ENCODE measurements at regions of chr13 and their contacts with region 1.

Region 1: GRCh38 chr13:49996951-49997895 is at the start of gene TRIM13:
- DNase-seq: peak; percentile 64 to 85 (median 82)
- ATAC-seq: peak; percentile 88
- H3K4me3 ChIP-seq: peak within 1 kb of the TSS; percentile 97
- H3K4me3 Mint-ChIP-seq: peak within 1 kb of the TSS; percentile 83 to 95 (median 86)
- H3K27ac ChIP-seq: peak within 1 kb of the TSS; percentile 89
- H3K27ac Mint-ChIP-seq: peak within 1 kb of the TSS; percentile 84 to 92 (median 87)
- H3K4me1 ChIP-seq: peaks cover 25 to 31% of the 10 kb centered on the region in 2 donors
- H3K4me1 Mint-ChIP-seq: peaks cover 16 to 57% (median 49%) of the 10 kb centered on the region in 7 donors
- H3K27me3 ChIP-seq: no peaks in the 10 kb centered on the region
- H3K27me3 Mint-ChIP-seq: no peaks in the 10 kb centered on the region
- total RNA-seq, gene TRIM13: 18.3 to 27.1 (median 21.8) TPM

Region 2: GRCh38 chr13:48037346-48038173 is 1959.7 kb before region 1 on chr13 and contains the start of gene NUDT15:
- CTCF ChIA-PET with region 1: no interaction called
- POLR2A ChIA-PET with region 1: no interaction called
- intact Hi-C with region 1: loop called in 1 of 2 experiments (anchors 2 kb)
- DNase-seq: peak; percentile 93 to 98 (median 97)
- ATAC-seq: peak; percentile 96
- H3K4me3 ChIP-seq: peak within 1 kb of the TSS; percentile 90
- H3K4me3 Mint-ChIP-seq: peak within 1 kb of the TSS; percentile 82 to 98 (median 95)
- H3K27ac ChIP-seq: peak within 1 kb of the TSS; percentile 91
- H3K27ac Mint-ChIP-seq: peak within 1 kb of the TSS; percentile 96 to 100 (median 97)
- H3K4me1 ChIP-seq: peaks cover 14 to 15% of the 10 kb centered on the region in 2 donors
- H3K4me1 Mint-ChIP-seq: peaks cover 15 to 52% (median 40%) of the 10 kb centered on the region in 7 donors
- H3K27me3 ChIP-seq: no peaks in the 10 kb centered on the region
- H3K27me3 Mint-ChIP-seq: no peaks in the 10 kb centered on the region
- total RNA-seq, gene NUDT15: 4.3 to 13.6 (median 8.7) TPM

Region 3: GRCh38 chr13:49858183-49858856 is 138.9 kb before region 1 on chr13:
- CTCF ChIA-PET with region 1: no interaction called
- POLR2A ChIA-PET with region 1: no interaction called
- intact Hi-C with region 1: no loop called
- DNase-seq: no peak
- ATAC-seq: no peak
- H3K4me3 ChIP-seq: no peak overlapping the region
- H3K4me3 Mint-ChIP-seq: no peak overlapping the region
- H3K27ac ChIP-seq: no peak overlapping the region
- H3K27ac Mint-ChIP-seq: no peak overlapping the region
- H3K4me1 ChIP-seq: no peaks in the 10 kb centered on the region
- H3K4me1 Mint-ChIP-seq: no peaks in the 10 kb centered on the region
- H3K27me3 ChIP-seq: no peaks in the 10 kb centered on the region
- H3K27me3 Mint-ChIP-seq: peaks cover 0 to 11% (median 4%) of the 10 kb centered on the region in 5 donors

Region 4: DNA sequence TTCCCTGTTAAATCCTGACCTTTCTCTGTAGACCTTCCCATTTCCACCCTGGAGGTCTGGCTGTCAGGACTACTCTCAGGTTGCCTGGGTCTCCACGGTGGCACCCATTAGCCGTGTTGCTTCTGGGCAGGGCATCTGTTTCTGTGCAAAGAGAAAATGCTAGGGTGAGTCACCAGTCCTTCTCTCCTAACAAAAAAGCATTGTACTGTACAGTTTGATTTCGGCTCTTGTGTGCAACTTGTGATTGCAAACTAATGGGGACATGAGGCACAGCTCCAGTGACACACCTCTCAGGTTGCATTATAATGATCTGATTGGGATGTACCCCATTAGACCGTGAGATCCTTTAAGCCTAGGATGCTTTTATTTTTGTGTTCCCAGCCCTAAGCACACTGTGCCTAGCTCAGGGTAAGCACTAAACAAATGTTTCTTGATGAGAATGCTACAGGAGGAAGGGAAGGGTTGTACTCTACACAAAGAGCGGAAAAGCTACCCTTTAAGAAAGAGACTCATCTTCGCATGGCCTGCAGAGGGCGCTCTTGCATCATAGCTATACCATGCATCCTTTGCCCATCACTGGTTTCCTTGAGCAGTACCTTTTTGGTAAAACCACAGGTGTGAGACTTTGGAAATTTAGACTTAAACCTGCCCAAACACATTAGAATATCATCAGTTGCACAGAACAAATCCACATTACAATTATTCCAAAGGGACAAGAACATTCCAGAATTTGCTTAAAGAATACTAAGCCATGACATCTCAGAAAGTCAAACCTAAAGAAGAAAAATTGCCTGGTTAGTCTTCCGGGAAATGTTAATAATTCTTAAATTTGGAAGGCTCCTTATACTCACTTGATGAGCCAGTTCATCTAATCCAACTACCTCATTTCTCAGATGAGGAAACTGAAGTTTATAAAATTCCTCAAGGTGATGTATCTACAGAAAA is 20.6 kb before region 1 on chr13:
- CTCF ChIA-PET with region 1: interaction called, 14 read pairs
- POLR2A ChIA-PET with region 1: interaction called, 7 read pairs
- intact Hi-C with region 1: loop called (anchors 1 to 2 kb)
- DNase-seq: peak; percentile 54 to 77 (median 66)
- ATAC-seq: peak; percentile 94
- H3K4me3 ChIP-seq: no peak overlapping the region
- H3K4me3 Mint-ChIP-seq: no peak overlapping the region
- H3K27ac ChIP-seq: no peak overlapping the region
- H3K27ac Mint-ChIP-seq: peak overlapping the region in 1 of 9 donors; percentile 38
- H3K4me1 ChIP-seq: no peaks in the 10 kb centered on the region
- H3K4me1 Mint-ChIP-seq: peaks cover 0 to 10% (median 0%) of the 10 kb centered on the region in 7 donors
- H3K27me3 ChIP-seq: no peaks in the 10 kb centered on the region
- H3K27me3 Mint-ChIP-seq: no peaks in the 10 kb centered on the region

Region 5: DNA sequence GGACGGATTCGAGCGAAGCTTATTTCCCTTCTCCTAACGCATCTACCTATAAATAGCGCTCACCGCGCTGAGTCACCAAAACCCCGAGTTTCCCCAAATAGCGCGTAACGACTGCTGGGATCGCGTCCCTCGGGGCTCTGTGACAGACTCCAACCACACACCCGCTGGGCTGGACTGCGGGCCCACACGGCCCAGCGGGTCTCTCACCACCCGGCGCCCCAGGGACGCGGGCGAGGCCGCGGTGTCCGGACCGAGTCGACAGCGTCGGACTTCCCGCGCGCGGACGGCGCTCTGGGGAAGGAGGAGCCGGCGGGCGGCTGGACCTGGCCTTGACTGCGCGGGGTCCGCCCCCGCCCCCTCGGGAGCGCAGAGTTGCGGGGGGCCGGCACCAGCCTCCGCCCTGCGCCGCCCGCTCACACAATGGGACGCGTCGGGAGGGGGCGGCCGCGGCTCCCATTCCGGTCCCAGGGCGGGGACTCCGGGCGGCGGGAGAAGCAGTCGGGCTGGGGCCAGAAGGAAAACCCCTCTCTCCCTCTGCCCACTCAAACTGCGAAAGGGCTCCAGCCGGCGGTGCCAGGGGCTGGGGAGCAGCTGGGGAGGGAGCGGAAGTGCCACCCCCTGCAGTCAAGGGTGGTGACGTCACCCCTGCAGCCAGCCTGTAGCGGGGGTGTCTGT is 126.8 kb after region 1 on chr13:
- CTCF ChIA-PET with region 1: interaction called, 18 read pairs
- POLR2A ChIA-PET with region 1: interaction called, 119 read pairs
- intact Hi-C with region 1: loop called (anchors 1 kb)
- DNase-seq: peak in 7 of 9 donors; percentile 46 to 88 (median 64)
- ATAC-seq: peak; percentile 82
- H3K4me3 ChIP-seq: peak overlapping the region; percentile 52
- H3K4me3 Mint-ChIP-seq: peak overlapping the region; percentile 86 to 96 (median 93)
- H3K27ac ChIP-seq: peak overlapping the region; percentile 95
- H3K27ac Mint-ChIP-seq: peak overlapping the region; percentile 90 to 99 (median 97)
- H3K4me1 ChIP-seq: peaks cover 24 to 29% of the 10 kb centered on the region in 2 donors
- H3K4me1 Mint-ChIP-seq: peaks cover 25 to 61% (median 50%) of the 10 kb centered on the region in 7 donors
- H3K27me3 ChIP-seq: peaks cover 0 to 11% of the 10 kb centered on the region in 2 donors
- H3K27me3 Mint-ChIP-seq: peaks cover 1 to 15% (median 12%) of the 10 kb centered on the region in 5 donors

Region 6: DNA sequence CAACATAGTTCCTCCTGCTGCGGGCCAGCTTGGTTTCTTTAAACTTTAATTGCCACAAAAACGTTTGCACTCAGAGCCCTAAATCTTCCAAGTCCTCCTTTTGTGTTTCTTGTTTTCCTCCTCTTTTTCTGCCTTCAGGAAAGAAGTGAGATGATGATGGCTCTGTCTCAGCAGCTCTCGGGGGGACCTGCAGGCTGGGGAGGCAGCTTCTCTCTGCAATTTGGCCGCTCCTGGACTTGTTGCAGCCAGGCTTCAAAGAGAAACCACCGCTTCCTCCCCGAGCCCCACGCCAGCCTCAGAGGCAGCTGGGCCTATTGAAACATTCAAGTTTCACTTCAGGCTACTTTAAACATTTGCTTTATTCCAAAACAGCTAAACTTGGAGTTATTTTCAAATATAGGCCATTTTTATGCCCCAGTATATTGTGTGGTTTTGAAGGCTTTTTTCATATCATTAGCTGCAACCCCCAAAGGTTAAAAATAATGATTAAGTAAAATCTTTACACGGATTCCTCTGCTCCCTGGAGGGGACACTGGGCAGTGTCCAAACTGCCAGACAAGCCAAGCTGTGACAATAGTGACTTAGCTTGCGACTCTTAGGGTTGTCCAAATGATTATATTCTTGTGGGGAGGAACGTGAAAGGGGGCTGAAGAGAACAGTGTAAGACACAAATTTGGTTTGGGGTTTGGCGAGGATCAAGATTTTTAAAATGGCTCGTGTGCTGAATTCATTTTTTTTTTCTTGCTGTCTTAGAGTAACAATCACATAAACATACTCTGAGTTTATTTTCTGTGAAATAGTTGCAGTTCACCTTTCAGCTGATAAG is 515.5 kb after region 1 on chr13:
- CTCF ChIA-PET with region 1: no interaction called
- POLR2A ChIA-PET with region 1: no interaction called
- intact Hi-C with region 1: loop called in 1 of 2 experiments (anchors 2 kb)
- DNase-seq: peak in 7 of 9 donors; percentile 11 to 41 (median 27)
- ATAC-seq: peak; percentile 76
- H3K4me3 ChIP-seq: peak overlapping the region; percentile 22
- H3K4me3 Mint-ChIP-seq: no peak overlapping the region
- H3K27ac ChIP-seq: peak overlapping the region; percentile 34
- H3K27ac Mint-ChIP-seq: no peak overlapping the region
- H3K4me1 ChIP-seq: peaks cover 15 to 16% of the 10 kb centered on the region in 2 donors
- H3K4me1 Mint-ChIP-seq: peaks cover 0 to 3% (median 0%) of the 10 kb centered on the region in 7 donors
- H3K27me3 ChIP-seq: no peaks in the 10 kb centered on the region
- H3K27me3 Mint-ChIP-seq: peaks cover 0 to 13% (median 0%) of the 10 kb centered on the region in 5 donors

Region 7: DNA sequence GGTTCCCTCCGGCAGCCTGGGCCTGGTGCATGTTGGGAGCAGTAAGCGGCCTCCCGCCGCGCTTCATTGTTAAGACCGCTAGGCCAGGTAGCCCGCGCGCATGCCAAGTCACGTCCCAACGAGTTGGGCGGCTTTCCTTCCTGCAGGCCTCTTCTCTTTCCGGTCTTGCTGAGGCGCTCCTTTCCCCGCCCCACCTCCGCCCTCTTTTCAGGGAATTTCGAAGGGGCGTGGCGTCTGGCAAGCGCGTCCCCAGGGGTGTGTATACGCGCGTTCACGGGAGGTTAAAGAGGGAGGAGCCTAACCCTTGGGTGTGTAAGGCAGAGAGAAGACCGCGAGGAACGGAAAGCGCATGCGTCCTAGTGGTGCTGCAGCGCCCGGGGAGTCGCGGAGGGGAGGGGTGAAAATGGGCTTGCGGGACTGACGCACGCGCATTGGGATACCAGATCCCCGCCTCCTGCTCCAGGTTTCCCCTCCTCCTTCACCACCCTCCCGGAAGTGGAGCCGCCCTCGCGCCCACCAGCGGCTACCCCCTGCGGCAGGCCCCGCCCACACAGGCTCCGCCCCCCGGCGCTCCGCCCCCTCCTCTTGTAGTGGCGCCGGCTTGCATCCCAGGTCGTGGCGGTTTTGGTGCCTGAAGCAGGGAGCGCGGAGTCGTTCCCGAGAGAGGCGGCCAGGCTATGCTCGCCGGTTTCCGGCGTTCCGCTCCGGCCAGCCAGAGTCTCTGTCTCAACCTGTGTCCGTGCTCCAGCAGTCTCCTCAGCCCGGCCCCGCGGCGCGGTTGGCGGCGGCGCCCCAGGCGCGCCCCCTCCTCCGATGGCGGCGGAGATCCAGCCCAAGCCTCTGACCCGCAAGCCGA is 1586.9 kb after region 1 on chr13 and contains the start of gene WDFY2:
- CTCF ChIA-PET with region 1: no interaction called
- POLR2A ChIA-PET with region 1: no interaction called
- intact Hi-C with region 1: loop called in 1 of 2 experiments (anchors 1 kb)
- DNase-seq: peak; percentile 99 to 100 (median 100)
- ATAC-seq: peak; percentile 92
- H3K4me3 ChIP-seq: peak within 1 kb of the TSS; percentile 95
- H3K4me3 Mint-ChIP-seq: peak within 1 kb of the TSS; percentile 85 to 100 (median 98)
- H3K27ac ChIP-seq: peak within 1 kb of the TSS; percentile 88
- H3K27ac Mint-ChIP-seq: peak within 1 kb of the TSS; percentile 95 to 100 (median 98)
- H3K4me1 ChIP-seq: peaks cover 12 to 17% of the 10 kb centered on the region in 2 donors
- H3K4me1 Mint-ChIP-seq: peaks cover 26 to 47% (median 35%) of the 10 kb centered on the region in 7 donors
- H3K27me3 ChIP-seq: no peaks in the 10 kb centered on the region
- H3K27me3 Mint-ChIP-seq: peaks cover 0 to 3% (median 0%) of the 10 kb centered on the region in 5 donors
- total RNA-seq, gene WDFY2: 13.3 to 44.3 (median 21.1) TPM

Measured in naive thymus-derived CD4-positive, alpha-beta T cell (primary cell).